GM12878 (cell line): ENCODE measurements at regions of chr20 and their contacts with region 1.

Region 1: GRCh38 chr20:37384683-37385174 is 38.8 kb downstream of the SRC start:
- DNase-seq: no peak
- ATAC-seq: peak; percentile 89
- H3K4me3 ChIP-seq: no peak overlapping the region
- H3K27ac ChIP-seq: peak overlapping the region; percentile 54
- H3K4me1 ChIP-seq: peaks cover 36% of the 10 kb centered on the region
- H3K27me3 ChIP-seq: no peaks in the 10 kb centered on the region
- CTCF ChIP-seq: peak; percentile 81 to 94 (median 87)
- EP300 ChIP-seq: no peak
- POLR2A ChIP-seq: no peak
- RAD21 ChIP-seq: peak; percentile 65

Region 2: DNA sequence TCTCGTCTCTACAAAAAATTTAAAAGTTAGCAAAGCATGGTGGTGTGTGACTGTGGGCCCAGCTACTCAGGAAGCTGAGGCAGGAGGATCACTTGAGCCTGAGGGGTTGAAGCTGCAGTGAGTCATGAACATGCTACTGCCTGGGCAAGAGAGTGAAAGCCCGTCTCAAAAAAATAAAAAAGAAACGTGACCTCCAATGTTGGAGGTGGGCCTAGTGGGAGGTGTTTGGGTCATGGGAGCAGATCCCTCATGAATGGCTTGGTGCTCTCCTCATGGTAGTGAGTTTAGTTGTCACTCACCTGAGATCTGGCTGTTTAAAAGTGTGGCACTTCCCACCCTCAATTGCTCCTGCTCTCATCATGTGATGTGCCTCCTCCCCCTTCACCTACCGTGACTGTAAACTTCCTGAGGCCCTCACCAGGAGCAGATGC is 313.2 kb before region 1 on chr20:
- CTCF ChIA-PET with region 1: no interaction called
- POLR2A ChIA-PET with region 1: no interaction called
- RAD21 ChIA-PET with region 1: no interaction called
- SMC1A ChIA-PET with region 1: no interaction called
- in situ Hi-C with region 1: no loop called
- intact Hi-C with region 1: no loop called
- DNase-seq: peak; percentile 24
- ATAC-seq: no peak
- H3K4me3 ChIP-seq: no peak overlapping the region
- H3K27ac ChIP-seq: peak overlapping the region; percentile 48
- H3K4me1 ChIP-seq: peaks cover 9% of the 10 kb centered on the region
- H3K27me3 ChIP-seq: no peaks in the 10 kb centered on the region
- CTCF ChIP-seq: no peak
- EP300 ChIP-seq: no peak
- POLR2A ChIP-seq: no peak
- RAD21 ChIP-seq: no peak

Region 3: GRCh38 chr20:37265152-37265551 is 119.6 kb before region 1 on chr20:
- CTCF ChIA-PET with region 1: interaction called, 44 read pairs
- POLR2A ChIA-PET with region 1: interaction called, 13 read pairs
- RAD21 ChIA-PET with region 1: interaction called, 28 read pairs
- SMC1A ChIA-PET with region 1: interaction called, 37 read pairs
- in situ Hi-C with region 1: loop called (anchors 5 kb)
- intact Hi-C with region 1: loop called (anchors 1 kb)
- DNase-seq: no peak
- ATAC-seq: peak; percentile 87
- H3K4me3 ChIP-seq: no peak overlapping the region
- H3K27ac ChIP-seq: no peak overlapping the region
- H3K4me1 ChIP-seq: peaks cover 14% of the 10 kb centered on the region
- H3K27me3 ChIP-seq: no peaks in the 10 kb centered on the region; a peak in 1 of 4 replicates
- CTCF ChIP-seq: no peak
- EP300 ChIP-seq: 0 out of 4 replicates have a peak, but pooled peaks of 1 of the 2 experiments have one; percentile 51
- POLR2A ChIP-seq: no peak
- RAD21 ChIP-seq: no peak

Region 4: GRCh38 chr20:37282556-37282955 is 102.2 kb before region 1 on chr20:
- CTCF ChIA-PET with region 1: interaction called, 34 read pairs
- POLR2A ChIA-PET with region 1: interaction called, 3 read pairs
- RAD21 ChIA-PET with region 1: interaction called, 26 read pairs
- SMC1A ChIA-PET with region 1: interaction called, 4 read pairs
- in situ Hi-C with region 1: no loop called
- intact Hi-C with region 1: no loop called
- DNase-seq: no peak
- ATAC-seq: no peak
- H3K4me3 ChIP-seq: no peak overlapping the region
- H3K27ac ChIP-seq: no peak overlapping the region
- H3K4me1 ChIP-seq: peaks cover 2% of the 10 kb centered on the region
- H3K27me3 ChIP-seq: no peaks in the 10 kb centered on the region
- CTCF ChIP-seq: peak in 2 of 3 experiments; percentile 2 to 17; a peak in 1 of 6 replicates
- EP300 ChIP-seq: no peak
- POLR2A ChIP-seq: no peak
- RAD21 ChIP-seq: peak; percentile 22; the same call in 1 of the 2 replicates

Region 5: DNA sequence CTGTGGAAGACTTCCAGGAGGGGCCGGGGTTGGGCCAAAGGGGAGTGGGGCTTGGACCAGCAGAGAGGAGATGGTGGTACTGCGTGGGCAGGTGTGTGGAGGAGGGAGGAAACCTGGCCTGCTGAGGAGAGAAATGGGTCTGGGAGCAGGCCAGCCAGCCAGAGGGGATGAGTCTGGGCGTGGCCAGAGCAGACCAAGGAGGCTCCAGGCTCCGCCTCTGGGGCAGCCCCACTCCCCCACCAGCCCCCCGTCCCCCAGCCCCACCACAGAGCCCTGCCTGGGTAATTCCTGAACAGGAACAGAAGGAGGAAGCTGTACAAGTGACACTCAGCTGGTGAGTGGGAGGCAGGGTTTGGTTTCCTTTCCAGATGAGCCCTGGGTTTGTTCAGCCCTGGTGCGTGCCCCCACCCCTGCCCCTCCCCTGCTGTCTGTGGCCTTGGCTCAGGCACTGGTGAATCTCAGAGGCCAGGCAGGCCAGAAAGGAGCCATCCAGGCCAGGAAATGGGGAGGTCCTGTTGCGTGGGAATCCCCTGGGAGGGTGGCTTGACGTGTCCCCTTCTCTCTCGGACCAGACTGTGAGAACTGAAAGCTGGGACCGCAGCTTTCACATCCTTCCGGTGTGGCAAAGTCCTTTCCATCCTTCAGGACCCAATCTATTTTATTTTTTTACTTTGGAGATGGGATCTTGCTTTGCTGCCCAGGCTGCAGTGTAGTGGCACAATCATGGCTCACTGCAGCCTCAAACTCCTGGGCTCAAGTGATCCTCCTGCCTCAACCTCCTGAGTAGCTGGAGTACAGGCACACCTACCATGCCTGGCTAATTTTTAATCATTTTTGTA is 48.1 kb before region 1 on chr20:
- CTCF ChIA-PET with region 1: interaction called, 5 read pairs
- POLR2A ChIA-PET with region 1: interaction called, 5 read pairs
- RAD21 ChIA-PET with region 1: interaction called, 8 read pairs
- SMC1A ChIA-PET with region 1: interaction called, 3 read pairs
- in situ Hi-C with region 1: no loop called
- intact Hi-C with region 1: loop called (anchors 5 kb)
- DNase-seq: peak; percentile 94
- ATAC-seq: peak; percentile 88
- H3K4me3 ChIP-seq: peak overlapping the region; percentile 58; the same call in 1 of the 2 replicates
- H3K27ac ChIP-seq: peak overlapping the region; percentile 87
- H3K4me1 ChIP-seq: peaks cover 38% of the 10 kb centered on the region
- H3K27me3 ChIP-seq: no peaks in the 10 kb centered on the region
- CTCF ChIP-seq: no peak
- EP300 ChIP-seq: peak; percentile 66 to 81; a peak in 3 of 4 replicates
- POLR2A ChIP-seq: peak; percentile 41; the same call in 1 of the 2 replicates
- RAD21 ChIP-seq: no peak

Region 6: GRCh38 chr20:37373020-37373598 is 11.6 kb before region 1 on chr20:
- CTCF ChIA-PET with region 1: interaction called, 10 read pairs
- POLR2A ChIA-PET with region 1: interaction called, 3 read pairs
- RAD21 ChIA-PET with region 1: interaction called, 4 read pairs
- SMC1A ChIA-PET with region 1: interaction called, 13 read pairs
- in situ Hi-C with region 1: no loop called
- intact Hi-C with region 1: no loop called
- DNase-seq: no peak
- ATAC-seq: no peak
- H3K4me3 ChIP-seq: no peak overlapping the region
- H3K27ac ChIP-seq: no peak overlapping the region; the same call in 1 of the 2 replicates
- H3K4me1 ChIP-seq: peaks cover 75% of the 10 kb centered on the region
- H3K27me3 ChIP-seq: no peaks in the 10 kb centered on the region
- CTCF ChIP-seq: no peak
- EP300 ChIP-seq: no peak
- POLR2A ChIP-seq: no peak
- RAD21 ChIP-seq: no peak